Dendritic cell treated with granulocyte-macrophage colony-stimulating factor and Interleukin-4, amounts not matched to agents 40 ng/mL and 50 ng/mL, for 4 days (primary cell): ENCODE measurements at regions of chr16 and their contacts with region 1.

Region 1: GRCh38 chr16:29784901-29785500 is 5.5 kb upstream of the KIF22 start:
- H3K4me3 Mint-ChIP-seq: peak overlapping the region; percentile 42
- H3K27ac Mint-ChIP-seq: peak overlapping the region; percentile 42
- H3K4me1 Mint-ChIP-seq: peaks cover 31% of the 10 kb centered on the region
- H3K27me3 Mint-ChIP-seq: peaks cover 4% of the 10 kb centered on the region

Region 2: GRCh38 chr16:29745853-29746345 is 39.1 kb before region 1 on chr16 and contains the start of gene C16orf54:
- intact Hi-C with region 1: loop called (anchors 5 kb)
- H3K4me3 Mint-ChIP-seq: peak within 1 kb of the TSS; percentile 100
- H3K27ac Mint-ChIP-seq: peak within 1 kb of the TSS; percentile 96
- H3K4me1 Mint-ChIP-seq: peaks cover 53% of the 10 kb centered on the region
- H3K27me3 Mint-ChIP-seq: peaks cover 3% of the 10 kb centered on the region